ENCODE measurements at regions of chr18 and their contacts with region 1.

Region 1: DNA sequence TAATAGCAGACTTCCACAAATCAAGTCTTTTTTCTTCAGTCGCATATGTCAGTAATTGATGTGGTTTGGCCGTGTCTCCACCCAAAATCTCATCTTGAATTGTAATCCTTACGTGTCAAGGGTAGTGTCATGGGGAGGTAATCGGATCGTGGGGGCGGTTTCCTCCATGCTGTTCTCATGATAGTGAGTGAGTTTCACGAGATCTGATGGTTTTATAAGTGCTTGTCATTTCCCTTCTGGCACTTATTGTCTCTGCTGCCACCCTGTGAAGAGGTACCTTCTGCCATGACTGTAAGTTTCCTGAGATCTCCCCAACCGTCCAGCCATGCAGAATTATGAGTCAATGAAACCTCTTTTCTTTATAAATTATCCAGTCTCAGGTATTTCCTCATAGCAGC is 478.8 kb downstream of the PTPRM start:
- DNase-seq: no peak
- H3K4me3 ChIP-seq: no peak overlapping the region
- H3K27ac ChIP-seq: no peak overlapping the region
- H3K4me1 ChIP-seq: no peaks in the 10 kb centered on the region
- H3K27me3 ChIP-seq: no peaks in the 10 kb centered on the region
- CTCF ChIP-seq: no peak
- EP300 ChIP-seq: no peak
- POLR2A ChIP-seq: no peak

Region 2: DNA sequence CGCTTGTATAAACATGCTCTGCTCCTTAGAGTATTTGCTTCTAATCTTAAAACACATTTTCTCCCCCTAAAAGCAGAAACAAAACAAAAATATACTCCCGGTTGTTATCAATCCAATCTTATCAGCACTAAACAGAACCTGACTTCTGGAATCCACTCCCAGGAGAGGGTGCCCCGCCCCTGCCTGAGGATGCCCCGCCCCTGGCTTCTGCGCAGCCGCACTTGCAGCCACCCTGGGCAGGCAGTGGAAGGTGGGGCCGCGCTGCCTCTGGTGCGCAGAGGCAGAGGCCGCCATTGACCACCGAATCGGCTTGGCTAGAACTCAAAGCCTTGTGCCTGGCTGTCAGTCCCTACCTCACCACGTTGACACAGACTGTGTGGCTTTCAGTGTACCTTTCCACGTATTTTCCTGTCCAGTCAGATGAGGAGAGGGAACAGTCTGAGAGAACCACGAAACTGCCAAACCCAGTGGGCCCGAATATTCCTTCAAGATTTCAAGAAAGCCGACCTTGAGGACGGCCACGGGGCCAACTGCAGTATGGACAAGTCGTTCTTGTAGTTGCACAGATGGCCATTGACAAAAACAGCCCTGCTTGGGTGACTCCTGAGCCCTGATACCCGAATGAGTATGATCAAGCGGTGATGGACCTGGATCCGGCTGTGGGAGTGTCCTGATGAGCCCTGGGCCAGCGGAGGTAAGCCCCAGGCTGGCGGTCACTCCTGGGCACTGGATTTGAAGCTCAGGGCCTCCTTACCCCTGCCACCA is 1362.6 kb before region 1 on chr18:
- in situ Hi-C with region 1: no loop called
- intact Hi-C with region 1: no loop called
- DNase-seq: no peak
- H3K4me3 ChIP-seq: no peak overlapping the region
- H3K27ac ChIP-seq: peak overlapping the region in 2 of 4 donors; percentile 15 to 34
- H3K4me1 ChIP-seq: no peaks in the 10 kb centered on the region
- H3K27me3 ChIP-seq: no peaks in the 10 kb centered on the region
- CTCF ChIP-seq: no peak
- EP300 ChIP-seq: no peak
- POLR2A ChIP-seq: no peak

Region 3: GRCh38 chr18:7921938-7922587 is 123.8 kb before region 1 on chr18:
- in situ Hi-C with region 1: loop called in 1 of 4 experiments (anchors 25 kb)
- intact Hi-C with region 1: no loop called
- DNase-seq: no peak
- H3K4me3 ChIP-seq: no peak overlapping the region
- H3K27ac ChIP-seq: peak overlapping the region in 2 of 4 donors; percentile 5 to 22
- H3K4me1 ChIP-seq: peaks cover 0 to 6% (median 0%) of the 10 kb centered on the region in 4 donors
- H3K27me3 ChIP-seq: no peaks in the 10 kb centered on the region
- CTCF ChIP-seq: no peak
- EP300 ChIP-seq: no peak
- POLR2A ChIP-seq: no peak

Region 4: GRCh38 chr18:8359076-8359475 is 313.2 kb after region 1 on chr18:
- in situ Hi-C with region 1: no loop called
- intact Hi-C with region 1: no loop called
- DNase-seq: no peak
- H3K4me3 ChIP-seq: no peak overlapping the region
- H3K27ac ChIP-seq: no peak overlapping the region
- H3K4me1 ChIP-seq: no peaks in the 10 kb centered on the region
- H3K27me3 ChIP-seq: no peaks in the 10 kb centered on the region
- CTCF ChIP-seq: no peak
- EP300 ChIP-seq: no peak
- POLR2A ChIP-seq: no peak

Region 5: DNA sequence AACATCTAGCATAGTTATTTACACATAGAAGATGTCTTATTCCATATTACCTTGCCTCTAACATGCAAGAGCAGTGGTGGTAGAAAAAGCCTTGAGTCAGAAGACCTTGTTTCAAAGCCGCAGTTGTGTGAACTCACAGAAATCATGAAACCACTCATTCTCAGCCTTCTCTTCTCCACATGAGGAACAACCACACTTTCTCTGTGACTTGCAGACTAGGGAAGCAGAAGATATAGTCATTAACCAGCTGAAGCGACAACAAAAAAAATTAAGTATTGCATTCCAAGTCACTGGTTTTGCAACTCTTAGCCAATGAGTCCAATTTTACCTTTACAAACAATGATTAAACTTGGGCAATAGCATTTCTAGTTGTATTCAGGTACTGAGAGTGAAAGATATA is 1307.7 kb after region 1 on chr18:
- in situ Hi-C with region 1: no loop called
- intact Hi-C with region 1: loop called (anchors 5 kb)
- DNase-seq: no peak
- H3K4me3 ChIP-seq: no peak overlapping the region
- H3K27ac ChIP-seq: no peak overlapping the region
- H3K4me1 ChIP-seq: peaks cover under 1 to 11% (median 7%) of the 10 kb centered on the region in 4 donors
- H3K27me3 ChIP-seq: no peaks in the 10 kb centered on the region
- CTCF ChIP-seq: no peak
- EP300 ChIP-seq: no peak
- POLR2A ChIP-seq: no peak